MCF 10A (cell line): ENCODE measurements at regions of chr17 and their contacts with region 1.

Region 1: DNA sequence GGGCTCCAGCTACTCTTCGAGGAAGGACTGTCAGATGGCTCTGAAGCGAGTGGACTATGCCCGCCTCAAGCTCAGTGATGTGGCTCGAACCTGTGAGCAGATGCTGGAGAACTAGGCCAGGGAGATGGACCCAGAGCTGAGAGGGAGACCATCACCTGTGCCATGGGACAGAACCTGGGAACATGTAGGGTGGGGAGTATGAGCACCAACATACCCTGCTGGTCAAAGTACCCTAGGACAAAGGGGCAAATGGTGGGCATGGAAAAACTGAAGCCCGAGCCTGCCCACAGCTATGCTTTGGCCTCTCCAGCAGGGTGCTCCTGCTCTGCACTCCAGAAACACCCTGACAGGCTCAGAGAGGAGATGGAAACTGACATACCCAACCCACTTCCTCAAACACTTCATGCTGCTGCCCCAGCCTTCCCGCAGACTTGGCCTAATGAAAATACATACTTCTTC is 1.9 kb downstream of the MED11 start:
- DNase-seq: no peak
- H3K4me3 Mint-ChIP-seq: no peak overlapping the region
- H3K27ac Mint-ChIP-seq: no peak overlapping the region
- H3K4me1 Mint-ChIP-seq: peaks cover 22% of the 10 kb centered on the region
- H3K27me3 Mint-ChIP-seq: no peaks in the 10 kb centered on the region
- CTCF ChIP-seq: no peak

Region 2: GRCh38 chr17:4709794-4710692 is 23.1 kb before region 1 on chr17 and contains the start of gene ARRB2:
- CTCF ChIA-PET with region 1: no interaction called
- POLR2A ChIA-PET with region 1: interaction called, 7 read pairs
- intact Hi-C with region 1: loop called (anchors 1 kb)
- DNase-seq: peak; percentile 97
- H3K4me3 Mint-ChIP-seq: peak within 1 kb of the TSS; percentile 66
- H3K27ac Mint-ChIP-seq: peak within 1 kb of the TSS; percentile 53
- H3K4me1 Mint-ChIP-seq: peaks cover 11% of the 10 kb centered on the region
- H3K27me3 Mint-ChIP-seq: no peaks in the 10 kb centered on the region
- CTCF ChIP-seq: peak; percentile 55
- total RNA-seq, gene ARRB2: 20.7 and 25.1 TPM in 2 replicates

Region 3: GRCh38 chr17:4903051-4903818 is 170.1 kb after region 1 on chr17 and contains the start of gene CHRNE:
- CTCF ChIA-PET with region 1: interaction called, 3 read pairs
- POLR2A ChIA-PET with region 1: interaction called, 4 read pairs
- intact Hi-C with region 1: loop called (anchors 1 kb)
- DNase-seq: peak; percentile 87
- H3K4me3 Mint-ChIP-seq: peak within 1 kb of the TSS; percentile 13
- H3K27ac Mint-ChIP-seq: peak within 1 kb of the TSS; percentile 71
- H3K4me1 Mint-ChIP-seq: peaks cover 17% of the 10 kb centered on the region
- H3K27me3 Mint-ChIP-seq: no peaks in the 10 kb centered on the region
- CTCF ChIP-seq: peak; percentile 66
- total RNA-seq, gene CHRNE: not detected in 2 replicates

Region 4: GRCh38 chr17:4956493-4957061 is 223.5 kb after region 1 on chr17:
- CTCF ChIA-PET with region 1: no interaction called
- POLR2A ChIA-PET with region 1: no interaction called
- intact Hi-C with region 1: no loop called
- DNase-seq: no peak
- H3K4me3 Mint-ChIP-seq: no peak overlapping the region
- H3K27ac Mint-ChIP-seq: no peak overlapping the region
- H3K4me1 Mint-ChIP-seq: no peaks in the 10 kb centered on the region
- H3K27me3 Mint-ChIP-seq: no peaks in the 10 kb centered on the region
- CTCF ChIP-seq: no peak